ENCODE measurements at regions of chr14 and their contacts with region 1.

Region 1: GRCh38 chr14:75293920-75294642 is 15.5 kb downstream of the FOS start:
- DNase-seq: peak; percentile 97
- ATAC-seq: peak; percentile 95

Region 2: GRCh38 chr14:74932401-74932901 is 361.6 kb before region 1 on chr14:
- intact Hi-C with region 1: no loop called
- DNase-seq: peak; percentile 40
- ATAC-seq: peak; percentile 75

Region 3: GRCh38 chr14:75132382-75133086 is 161.5 kb before region 1 on chr14:
- intact Hi-C with region 1: loop called (anchors 2 kb)
- DNase-seq: no peak
- ATAC-seq: peak; percentile 77

Region 4: GRCh38 chr14:75176142-75176820 is 117.8 kb before region 1 on chr14 and contains the start of gene TMED10:
- intact Hi-C with region 1: loop called (anchors 2 kb)
- DNase-seq: peak; percentile 93
- ATAC-seq: peak; percentile 95
- total RNA-seq, gene TMED10: 280 TPM

Region 5: GRCh38 chr14:75234173-75235115 is 59.6 kb before region 1 on chr14:
- intact Hi-C with region 1: loop called (anchors 5 kb)
- DNase-seq: no peak
- ATAC-seq: no peak

Region 6: DNA sequence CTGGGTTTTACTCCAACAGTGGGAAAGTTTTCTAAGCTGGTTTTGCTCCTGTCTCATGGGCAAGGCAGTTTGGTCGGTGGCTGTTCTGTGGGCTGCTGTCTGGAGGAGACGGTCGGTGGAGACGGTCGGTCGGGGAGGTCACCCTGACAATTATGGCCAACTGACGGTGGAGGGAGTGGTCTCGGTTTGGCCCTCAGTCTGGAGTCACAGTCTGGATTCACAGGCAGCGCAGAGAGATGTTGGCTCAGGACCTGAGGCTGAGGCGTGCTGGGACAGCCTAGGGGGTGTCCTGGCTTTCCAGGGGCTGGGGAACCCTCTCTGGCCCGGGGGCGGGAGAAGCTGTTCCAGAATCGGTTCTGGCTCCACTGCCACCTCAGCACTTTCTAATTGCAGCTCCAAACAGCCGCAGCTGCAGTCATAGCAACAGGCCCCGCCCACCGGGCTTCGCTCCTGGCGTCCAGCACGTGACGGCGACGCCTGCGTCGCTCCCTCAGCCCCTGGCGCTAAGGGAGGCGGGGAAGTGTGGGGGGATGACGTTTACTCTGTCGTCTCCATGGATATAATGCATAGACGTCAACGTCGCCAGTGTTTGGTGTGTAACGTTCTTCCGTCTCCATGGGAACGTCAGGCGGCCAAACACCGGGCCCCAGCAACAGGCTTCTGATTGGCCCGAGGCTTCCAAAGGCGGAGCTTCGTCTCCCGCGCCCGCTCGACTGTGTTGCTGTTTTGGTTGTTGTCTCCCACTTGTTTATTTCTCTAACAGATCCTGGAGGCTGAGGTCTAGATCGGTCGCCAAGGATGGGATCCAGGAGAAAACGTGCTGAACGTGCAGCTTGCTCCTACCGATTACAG is 35.2 kb before region 1 on chr14:
- intact Hi-C with region 1: loop called (anchors 2 kb)
- DNase-seq: peak; percentile 99
- ATAC-seq: peak; percentile 96

Region 7: GRCh38 chr14:75278422-75279161 is 15.5 kb before region 1 on chr14 and contains the start of gene FOS:
- intact Hi-C with region 1: loop called (anchors 1 kb)
- DNase-seq: peak; percentile 97
- ATAC-seq: peak; percentile 87
- total RNA-seq, gene FOS: 9.5 TPM